ENCODE measurements at regions of chr3 and their contacts with region 1.

Region 1: DNA sequence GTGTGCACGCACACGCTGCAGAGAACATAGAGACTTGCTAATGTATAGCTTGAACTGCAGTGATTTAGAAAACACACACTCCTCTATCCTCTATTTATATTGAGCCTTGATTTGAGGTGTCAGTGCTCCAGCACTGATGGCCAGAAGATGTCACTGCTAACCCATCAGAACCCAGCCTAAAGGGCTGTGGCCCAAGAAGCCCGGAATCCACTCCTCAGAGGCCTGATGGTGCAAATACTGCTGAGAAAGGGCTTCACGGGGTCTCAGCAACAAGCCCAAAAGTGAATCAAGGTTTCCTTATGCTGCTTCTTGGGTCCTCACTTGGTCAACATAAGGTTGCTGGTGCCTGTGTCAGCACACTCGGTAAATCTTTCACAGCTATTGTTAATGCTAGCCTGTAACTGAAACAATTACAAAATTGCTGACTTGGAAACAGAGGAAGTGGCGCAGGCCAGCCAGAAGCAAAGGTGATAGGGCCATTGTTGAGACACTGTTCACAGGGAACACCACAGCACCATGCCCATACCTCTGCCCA is 60.3 kb downstream of the HEG1 start:
- DNase-seq: peak; percentile 21
- ATAC-seq: peak; percentile 85
- H3K4me3 Mint-ChIP-seq: no peak overlapping the region
- H3K27ac Mint-ChIP-seq: no peak overlapping the region
- H3K4me1 Mint-ChIP-seq: peaks cover 5% of the 10 kb centered on the region
- H3K27me3 Mint-ChIP-seq: no peaks in the 10 kb centered on the region
- CTCF ChIP-seq: no peak

Region 2: GRCh38 chr3:124217542-124217941 is 778.0 kb before region 1 on chr3:
- CTCF ChIA-PET with region 1: no interaction called
- POLR2A ChIA-PET with region 1: no interaction called
- intact Hi-C with region 1: no loop called
- DNase-seq: no peak
- ATAC-seq: no peak
- H3K4me3 Mint-ChIP-seq: no peak overlapping the region
- H3K27ac Mint-ChIP-seq: no peak overlapping the region
- H3K4me1 Mint-ChIP-seq: no peaks in the 10 kb centered on the region
- H3K27me3 Mint-ChIP-seq: peaks cover 4% of the 10 kb centered on the region
- CTCF ChIP-seq: no peak

Region 3: GRCh38 chr3:124492811-124493210 is 502.7 kb before region 1 on chr3:
- CTCF ChIA-PET with region 1: no interaction called
- POLR2A ChIA-PET with region 1: no interaction called
- intact Hi-C with region 1: no loop called
- DNase-seq: no peak
- ATAC-seq: no peak
- H3K4me3 Mint-ChIP-seq: no peak overlapping the region
- H3K27ac Mint-ChIP-seq: no peak overlapping the region
- H3K4me1 Mint-ChIP-seq: peaks cover 1% of the 10 kb centered on the region
- H3K27me3 Mint-ChIP-seq: peaks cover 9% of the 10 kb centered on the region
- CTCF ChIP-seq: no peak

Region 4: DNA sequence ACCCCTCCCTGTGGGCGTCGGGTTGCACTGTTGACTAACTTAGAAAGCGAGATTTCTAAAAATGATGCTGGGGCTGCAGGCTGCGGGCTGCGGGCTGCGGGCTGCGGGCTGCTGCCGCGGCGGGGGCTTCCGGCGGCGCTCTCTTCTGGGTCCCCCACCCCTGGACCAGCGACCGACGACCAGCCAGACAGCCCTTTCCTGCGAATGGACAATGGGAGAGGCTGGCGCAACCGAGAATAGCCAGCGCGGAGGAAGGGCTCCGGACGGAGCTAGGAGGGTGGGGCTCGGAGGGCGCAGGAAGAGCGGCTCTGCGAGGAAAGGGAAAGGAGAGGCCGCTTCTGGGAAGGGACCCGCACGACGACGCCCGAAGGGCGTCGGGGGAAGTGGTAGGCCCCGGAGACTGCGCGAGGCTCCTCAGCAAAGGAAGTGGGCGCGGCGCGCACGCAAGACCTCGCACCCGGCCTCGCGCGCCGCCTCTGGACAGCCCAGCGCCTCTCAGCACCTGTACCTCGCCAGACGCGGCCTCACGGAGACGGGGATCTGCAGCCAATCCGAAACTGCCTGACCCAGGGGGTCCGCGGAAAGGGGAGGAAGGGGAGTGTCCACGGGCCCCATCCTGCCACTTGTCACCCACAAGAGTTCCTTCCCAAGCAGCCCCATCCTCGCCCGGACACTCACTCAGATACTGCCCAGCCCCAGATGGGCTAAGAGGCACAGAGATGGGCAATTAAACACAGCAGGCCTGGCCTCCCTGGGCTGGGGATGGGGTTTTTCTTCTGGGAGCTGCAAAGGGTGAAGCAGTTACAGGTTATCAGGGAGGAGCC is 146.3 kb after region 1 on chr3:
- CTCF ChIA-PET with region 1: no interaction called
- POLR2A ChIA-PET with region 1: no interaction called
- intact Hi-C with region 1: loop called (anchors 2 kb)
- DNase-seq: peak; percentile 44
- ATAC-seq: peak; percentile 88
- H3K4me3 Mint-ChIP-seq: peak overlapping the region; percentile 82
- H3K27ac Mint-ChIP-seq: peak overlapping the region; percentile 79
- H3K4me1 Mint-ChIP-seq: peaks cover 66% of the 10 kb centered on the region
- H3K27me3 Mint-ChIP-seq: no peaks in the 10 kb centered on the region
- CTCF ChIP-seq: no peak

Region 5: GRCh38 chr3:125202197-125202596 is 206.7 kb after region 1 on chr3:
- CTCF ChIA-PET with region 1: interaction called, 10 read pairs
- POLR2A ChIA-PET with region 1: no interaction called
- intact Hi-C with region 1: loop called (anchors 2 kb)
- DNase-seq: no peak
- ATAC-seq: peak; percentile 50
- H3K4me3 Mint-ChIP-seq: no peak overlapping the region
- H3K27ac Mint-ChIP-seq: no peak overlapping the region
- H3K4me1 Mint-ChIP-seq: peaks cover 8% of the 10 kb centered on the region
- H3K27me3 Mint-ChIP-seq: peaks cover 3% of the 10 kb centered on the region
- CTCF ChIP-seq: no peak

Region 6: DNA sequence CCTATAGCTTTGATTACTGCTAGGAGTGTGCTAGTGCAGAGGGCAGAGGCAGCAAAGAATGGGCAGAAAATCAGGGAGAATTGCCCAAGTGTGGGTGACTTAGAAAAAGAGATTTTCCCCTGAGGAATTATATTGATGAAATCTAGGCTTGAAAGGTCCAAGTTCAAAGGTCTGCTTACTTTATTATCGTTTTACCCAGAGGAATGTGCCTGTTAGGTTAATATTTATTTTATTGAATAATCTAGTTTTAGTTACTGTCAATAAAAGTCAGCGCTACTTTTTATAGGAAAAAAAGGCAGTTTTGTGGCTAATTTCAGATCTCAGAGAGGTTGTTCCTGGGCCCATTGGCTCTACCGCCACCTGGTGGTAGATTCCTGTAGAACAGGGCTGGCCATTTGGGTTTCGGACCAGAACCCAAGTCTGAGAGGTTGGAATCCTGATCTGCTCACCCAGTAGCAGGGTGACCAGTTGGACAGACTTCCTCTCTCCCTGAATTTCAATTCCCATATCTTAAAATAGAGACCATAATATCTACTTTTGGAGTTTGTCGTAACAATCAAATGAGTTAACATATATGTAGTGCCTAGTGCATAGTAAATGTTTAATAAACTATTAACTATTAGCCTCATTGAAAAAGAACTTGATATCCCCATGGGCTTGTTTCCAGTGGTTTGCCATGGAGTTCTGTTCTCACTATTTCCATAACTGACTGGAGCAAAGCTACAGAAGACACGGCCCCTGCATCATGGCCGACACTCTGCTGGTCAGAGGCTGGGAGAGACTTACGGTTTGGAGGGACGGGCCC is 442.3 kb after region 1 on chr3:
- CTCF ChIA-PET with region 1: interaction called, 67 read pairs
- POLR2A ChIA-PET with region 1: no interaction called
- intact Hi-C with region 1: loop called (anchors 1 kb)
- DNase-seq: peak; percentile 42
- ATAC-seq: peak; percentile 57
- H3K4me3 Mint-ChIP-seq: no peak overlapping the region
- H3K27ac Mint-ChIP-seq: no peak overlapping the region
- H3K4me1 Mint-ChIP-seq: no peaks in the 10 kb centered on the region
- H3K27me3 Mint-ChIP-seq: no peaks in the 10 kb centered on the region
- CTCF ChIP-seq: peak; percentile 95

Measured in activated B cell treated with CpG ODN at 0.5 μM for 24 hours (primary cell).